Endothelial cell of umbilical vein (primary cell): ENCODE measurements at regions of chr13 and their contacts with region 1.

Region 1: DNA sequence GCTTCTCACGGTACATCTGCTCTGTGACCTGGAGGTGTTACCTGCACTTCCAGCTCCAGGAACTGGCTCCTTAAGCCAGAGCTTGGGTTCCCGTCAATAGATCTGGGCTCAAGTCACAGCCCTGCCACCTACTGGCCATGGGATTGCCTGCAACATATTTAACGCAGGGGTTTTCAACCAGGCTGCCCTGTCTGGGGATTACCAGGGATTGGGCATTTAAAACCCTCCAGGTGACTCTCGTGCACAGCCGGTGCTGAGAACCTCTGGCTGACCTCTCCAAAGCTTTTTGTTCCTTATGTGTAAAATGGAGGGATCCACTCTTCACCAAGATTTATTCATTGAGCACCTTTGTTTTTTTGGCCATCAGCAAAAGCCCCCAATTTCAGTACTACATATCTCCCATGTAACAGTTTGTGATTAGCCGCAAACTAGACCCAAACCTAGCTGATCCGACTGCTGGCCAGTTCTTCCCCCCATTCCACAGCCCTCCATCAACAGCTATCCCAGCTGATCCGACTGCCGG is 76.6 kb upstream of the STK24 start:
- DNase-seq: peak; percentile 78
- H3K4me3 ChIP-seq: no peak overlapping the region
- H3K27ac ChIP-seq: no peak overlapping the region
- H3K4me1 ChIP-seq: no peaks in the 10 kb centered on the region
- H3K27me3 ChIP-seq: peaks cover 0 to 5% of the 10 kb centered on the region in 2 experiments
- CTCF ChIP-seq: peak; percentile 79 to 86
- POLR2A ChIP-seq: no peak

Region 2: DNA sequence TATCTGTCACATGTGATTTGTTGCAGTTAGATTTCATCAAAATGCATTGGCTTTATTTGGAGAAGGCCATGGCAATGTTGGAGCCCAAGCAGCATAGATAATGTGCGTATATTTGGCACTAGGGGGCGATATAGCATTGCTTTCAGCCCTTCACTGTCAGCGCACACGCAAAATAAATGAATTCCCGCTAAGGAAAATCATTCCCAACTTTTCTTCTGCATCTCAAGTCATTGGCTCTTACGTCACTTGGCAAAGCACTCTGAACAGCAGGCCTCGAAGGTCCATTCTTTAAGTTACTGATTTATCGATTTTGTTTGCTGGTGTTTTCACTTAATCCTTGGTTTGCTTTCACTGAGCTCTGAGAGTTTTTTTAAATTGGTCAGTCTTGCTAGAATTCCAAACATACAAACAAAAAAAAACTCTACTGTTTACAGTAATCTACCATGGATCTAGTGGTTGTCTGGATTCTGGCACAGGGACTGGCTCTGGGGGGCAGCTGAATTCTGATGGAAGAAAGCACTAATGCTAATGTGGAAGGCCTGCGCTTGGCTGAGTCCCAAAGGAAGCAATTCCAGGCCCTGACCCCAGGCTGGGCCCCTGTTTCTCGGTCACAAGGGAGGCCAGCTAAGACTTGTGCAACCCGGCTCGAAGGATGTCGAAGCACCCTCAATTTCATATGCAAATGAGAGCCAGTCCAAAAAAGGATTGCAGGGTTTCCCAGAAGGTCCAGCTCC is 797.8 kb before region 1 on chr13:
- CTCF ChIA-PET with region 1: interaction called, 11 read pairs
- POLR2A ChIA-PET with region 1: no interaction called
- dilution Hi-C with region 1: no loop called
- intact Hi-C with region 1: no loop called
- DNase-seq: peak; percentile 78
- H3K4me3 ChIP-seq: no peak overlapping the region
- H3K27ac ChIP-seq: no peak overlapping the region
- H3K4me1 ChIP-seq: no peaks in the 10 kb centered on the region
- H3K27me3 ChIP-seq: no peaks in the 10 kb centered on the region
- CTCF ChIP-seq: peak; percentile 72 to 76
- POLR2A ChIP-seq: no peak

Region 3: GRCh38 chr13:98445340-98446233 is 207.9 kb before region 1 on chr13:
- CTCF ChIA-PET with region 1: interaction called, 150 read pairs
- POLR2A ChIA-PET with region 1: no interaction called
- dilution Hi-C with region 1: loop called (anchors 25 kb)
- intact Hi-C with region 1: loop called (anchors 1 kb)
- DNase-seq: peak; percentile 64
- H3K4me3 ChIP-seq: no peak overlapping the region
- H3K27ac ChIP-seq: no peak overlapping the region
- H3K4me1 ChIP-seq: no peaks in the 10 kb centered on the region
- H3K27me3 ChIP-seq: no peaks in the 10 kb centered on the region
- CTCF ChIP-seq: peak; percentile 93 to 99
- POLR2A ChIP-seq: no peak

Region 4: DNA sequence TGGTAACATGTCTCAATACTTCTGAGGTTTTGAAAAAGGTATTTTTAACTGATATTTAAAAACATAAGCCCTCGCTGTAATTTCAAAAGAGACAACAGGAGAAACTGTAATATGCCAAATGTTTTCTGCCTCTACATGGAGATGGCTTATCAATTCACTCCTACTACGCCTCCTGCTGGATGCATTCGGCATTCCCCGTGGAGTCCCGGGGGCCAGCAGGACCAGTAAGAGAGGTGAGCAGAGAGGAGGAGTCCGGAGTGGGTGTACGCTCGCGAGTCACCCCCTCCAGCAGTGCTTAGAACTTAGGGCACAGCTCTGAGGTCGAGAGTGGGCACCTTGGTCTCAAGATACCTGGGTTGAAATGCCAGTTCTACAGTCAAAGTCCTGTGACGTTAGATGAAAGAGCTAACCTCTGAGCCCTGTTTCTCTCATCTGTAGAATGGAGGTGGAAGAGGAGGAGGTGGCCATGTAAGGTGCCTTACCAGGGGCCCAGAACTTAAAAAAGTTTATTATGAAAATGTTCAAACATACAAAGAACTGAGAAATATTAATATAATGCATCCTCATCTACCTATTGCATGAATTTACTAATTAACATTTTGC is 186.8 kb before region 1 on chr13:
- CTCF ChIA-PET with region 1: interaction called, 30 read pairs
- POLR2A ChIA-PET with region 1: no interaction called
- dilution Hi-C with region 1: no loop called
- intact Hi-C with region 1: loop called (anchors 1 kb)
- DNase-seq: peak; percentile 67
- H3K4me3 ChIP-seq: no peak overlapping the region
- H3K27ac ChIP-seq: no peak overlapping the region
- H3K4me1 ChIP-seq: no peaks in the 10 kb centered on the region
- H3K27me3 ChIP-seq: no peaks in the 10 kb centered on the region
- CTCF ChIP-seq: peak; percentile 75 to 77
- POLR2A ChIP-seq: no peak

Region 5: DNA sequence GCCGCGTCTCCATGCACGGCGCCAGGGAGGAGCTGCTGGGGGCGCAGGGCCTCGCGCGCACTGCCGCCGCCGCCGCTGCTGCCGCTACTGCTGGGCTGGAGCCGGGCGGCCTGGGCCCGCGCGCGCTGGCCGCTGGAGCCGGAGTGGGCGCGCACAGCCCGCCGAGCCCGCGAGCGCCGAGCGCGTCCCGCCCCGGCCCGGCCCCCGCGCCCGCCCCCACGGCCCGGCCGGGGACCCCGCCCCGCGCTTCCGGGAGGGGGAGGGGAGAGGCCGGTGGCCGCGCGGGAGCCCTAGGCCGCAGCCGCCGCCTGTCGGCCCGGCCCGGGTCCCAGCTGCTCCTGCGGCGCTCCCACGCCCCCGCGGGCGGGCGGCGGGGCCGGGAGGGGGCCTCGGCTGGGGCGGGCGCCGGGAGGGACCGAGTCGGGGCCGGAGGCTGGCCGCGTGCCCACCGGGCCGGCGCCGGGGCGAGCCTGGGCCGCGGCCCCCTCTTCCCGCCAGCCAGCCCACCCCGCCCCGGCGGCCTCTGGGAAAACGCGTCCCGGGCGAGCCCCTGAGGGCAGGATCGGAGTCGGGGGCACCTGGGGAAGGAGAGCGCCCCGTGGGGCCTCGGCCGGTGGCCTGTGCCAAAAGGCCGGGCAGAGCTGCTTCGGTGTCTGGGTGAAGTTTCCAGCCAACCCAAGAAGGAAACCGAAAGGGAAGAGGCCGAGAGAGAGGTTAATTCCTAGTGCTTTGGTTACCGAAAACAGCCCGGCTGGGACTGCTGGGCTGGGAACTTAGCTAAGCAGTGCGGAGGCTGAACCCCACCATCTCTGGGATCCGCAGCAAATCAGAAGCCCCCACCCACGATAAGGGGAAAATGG is 76.3 kb before region 1 on chr13 and contains the start of gene STK24:
- CTCF ChIA-PET with region 1: interaction called, 9 read pairs
- POLR2A ChIA-PET with region 1: no interaction called
- dilution Hi-C with region 1: no loop called
- intact Hi-C with region 1: loop called (anchors 5 kb)
- DNase-seq: peak; percentile 78
- H3K4me3 ChIP-seq: peak within 1 kb of the TSS; percentile 84 to 98 (median 98)
- H3K27ac ChIP-seq: peak within 1 kb of the TSS; percentile 95
- H3K4me1 ChIP-seq: peaks cover 20% of the 10 kb centered on the region
- H3K27me3 ChIP-seq: no peaks in the 10 kb centered on the region
- CTCF ChIP-seq: no peak
- POLR2A ChIP-seq: peak; percentile 73
- total RNA-seq, gene STK24: 99.4 and 100 TPM in 2 replicates

Region 6: GRCh38 chr13:98641075-98641474 is 12.4 kb before region 1 on chr13:
- CTCF ChIA-PET with region 1: interaction called, 18 read pairs
- POLR2A ChIA-PET with region 1: no interaction called
- dilution Hi-C with region 1: no loop called
- intact Hi-C with region 1: no loop called
- DNase-seq: no peak
- H3K4me3 ChIP-seq: no peak overlapping the region
- H3K27ac ChIP-seq: no peak overlapping the region
- H3K4me1 ChIP-seq: no peaks in the 10 kb centered on the region
- H3K27me3 ChIP-seq: peaks cover 0 to 8% of the 10 kb centered on the region in 2 experiments
- CTCF ChIP-seq: no peak
- POLR2A ChIP-seq: no peak

Region 7: GRCh38 chr13:98839856-98840769 is 186.6 kb after region 1 on chr13:
- CTCF ChIA-PET with region 1: no interaction called
- POLR2A ChIA-PET with region 1: no interaction called
- dilution Hi-C with region 1: no loop called
- intact Hi-C with region 1: no loop called
- DNase-seq: peak; percentile 70
- H3K4me3 ChIP-seq: no peak overlapping the region
- H3K27ac ChIP-seq: no peak overlapping the region
- H3K4me1 ChIP-seq: peaks cover 6% of the 10 kb centered on the region
- H3K27me3 ChIP-seq: no peaks in the 10 kb centered on the region
- CTCF ChIP-seq: peak; percentile 90 to 94
- POLR2A ChIP-seq: no peak